Pancreas (tissue), 10 donors: ENCODE measurements at regions of chr3 and their contacts with region 1.

Region 1: GRCh38 chr3:58018892-58019742 is 10.9 kb downstream of the FLNB start:
- DNase-seq: no peak
- ATAC-seq: no peak
- H3K4me3 ChIP-seq: no peak overlapping the region
- H3K27ac ChIP-seq: peak overlapping the region in 3 of 4 donors; percentile 19 to 74 (median 62)
- H3K4me1 ChIP-seq: peaks cover 45 to 55% (median 53%) of the 10 kb centered on the region in 3 donors
- H3K27me3 ChIP-seq: no peaks in the 10 kb centered on the region
- CTCF ChIP-seq: no peak

Region 2: DNA sequence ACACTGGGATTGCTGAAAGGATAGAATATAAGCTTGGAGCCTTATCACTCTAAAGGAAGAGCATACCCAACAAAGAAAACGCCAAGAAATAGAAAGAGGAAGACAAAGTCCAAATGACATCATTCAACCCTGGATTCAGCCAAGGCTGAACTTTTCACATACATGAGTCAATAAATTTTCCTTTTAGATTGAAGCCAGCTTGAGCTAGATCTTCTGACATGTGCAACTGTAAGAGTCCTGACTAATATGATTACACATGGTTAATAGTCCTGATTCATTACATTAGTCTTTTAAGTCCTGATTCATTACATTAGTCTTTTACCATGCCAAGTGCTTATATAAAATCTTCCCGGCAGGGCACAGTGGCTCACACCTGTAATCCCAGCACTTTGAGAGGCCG is 312.7 kb before region 1 on chr3:
- intact Hi-C with region 1: no loop called
- DNase-seq: no peak
- ATAC-seq: peak in 3 of 4 donors; percentile 55 to 81 (median 57)
- H3K4me3 ChIP-seq: no peak overlapping the region
- H3K27ac ChIP-seq: no peak overlapping the region
- H3K4me1 ChIP-seq: peaks cover 0 to 4% (median 0%) of the 10 kb centered on the region in 3 donors
- H3K27me3 ChIP-seq: no peaks in the 10 kb centered on the region
- CTCF ChIP-seq: no peak

Region 3: GRCh38 chr3:58111513-58112186 is 92.5 kb after region 1 on chr3:
- intact Hi-C with region 1: loop called in 1 of 3 experiments (anchors 5 kb)
- DNase-seq: peak; percentile 78 to 95 (median 92)
- ATAC-seq: peak; percentile 93 to 98 (median 94)
- H3K4me3 ChIP-seq: peak overlapping the region in 1 of 4 donors; percentile 19
- H3K27ac ChIP-seq: peak overlapping the region; percentile 49 to 88 (median 82)
- H3K4me1 ChIP-seq: peaks cover 13 to 24% (median 19%) of the 10 kb centered on the region in 3 donors
- H3K27me3 ChIP-seq: no peaks in the 10 kb centered on the region
- CTCF ChIP-seq: no peak